Activated CD4-positive, alpha-beta memory T cell treated with anti-CD3 and anti-CD28 coated beads for 36 hours (primary cell): ENCODE measurements at regions of chr11 and their contacts with region 1.

Region 1: GRCh38 chr11:75142714-75143419 is 8.0 kb upstream of the SLCO2B1 start:
- DNase-seq: peak; percentile 89
- H3K4me3 Mint-ChIP-seq: no peak overlapping the region
- H3K27ac Mint-ChIP-seq: peak overlapping the region; percentile 75
- H3K4me1 Mint-ChIP-seq: peaks cover 19% of the 10 kb centered on the region
- H3K27me3 Mint-ChIP-seq: peaks cover 3% of the 10 kb centered on the region

Region 2: DNA sequence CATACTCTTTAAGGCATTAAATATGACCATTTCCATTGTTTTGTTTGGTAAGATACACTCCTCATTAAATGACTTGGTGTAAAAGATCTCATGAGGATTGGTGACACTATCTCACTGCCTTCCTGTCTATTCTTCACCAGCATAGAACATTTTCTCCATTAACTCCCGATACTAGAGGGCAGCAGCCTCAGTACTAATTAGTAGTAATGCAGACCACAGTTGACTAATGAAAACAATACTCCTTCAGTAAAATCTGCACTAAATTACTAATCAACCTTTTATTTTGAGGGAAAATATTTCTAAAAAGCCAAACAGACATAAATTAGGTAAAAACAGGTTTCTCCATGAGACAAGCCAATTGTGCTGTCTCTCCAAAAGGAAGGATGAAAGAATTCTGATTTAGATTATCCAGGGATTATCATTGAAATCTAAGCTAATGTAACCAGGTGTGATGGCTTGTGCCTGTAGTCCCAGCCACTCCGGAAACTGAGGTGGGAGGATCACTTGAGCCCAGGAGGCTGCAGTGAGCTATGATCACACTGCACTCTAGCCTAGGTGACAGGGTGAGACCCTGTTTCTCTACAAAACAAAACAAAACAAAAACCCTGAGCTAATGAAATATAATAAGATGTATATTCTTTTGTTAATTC is 754.1 kb before region 1 on chr11:
- CTCF ChIA-PET with region 1: no interaction called
- POLR2A ChIA-PET with region 1: no interaction called
- intact Hi-C with region 1: no loop called
- DNase-seq: peak; percentile 68
- H3K4me3 Mint-ChIP-seq: no peak overlapping the region
- H3K27ac Mint-ChIP-seq: peak overlapping the region; percentile 4
- H3K4me1 Mint-ChIP-seq: peaks cover 31% of the 10 kb centered on the region
- H3K27me3 Mint-ChIP-seq: no peaks in the 10 kb centered on the region

Region 3: DNA sequence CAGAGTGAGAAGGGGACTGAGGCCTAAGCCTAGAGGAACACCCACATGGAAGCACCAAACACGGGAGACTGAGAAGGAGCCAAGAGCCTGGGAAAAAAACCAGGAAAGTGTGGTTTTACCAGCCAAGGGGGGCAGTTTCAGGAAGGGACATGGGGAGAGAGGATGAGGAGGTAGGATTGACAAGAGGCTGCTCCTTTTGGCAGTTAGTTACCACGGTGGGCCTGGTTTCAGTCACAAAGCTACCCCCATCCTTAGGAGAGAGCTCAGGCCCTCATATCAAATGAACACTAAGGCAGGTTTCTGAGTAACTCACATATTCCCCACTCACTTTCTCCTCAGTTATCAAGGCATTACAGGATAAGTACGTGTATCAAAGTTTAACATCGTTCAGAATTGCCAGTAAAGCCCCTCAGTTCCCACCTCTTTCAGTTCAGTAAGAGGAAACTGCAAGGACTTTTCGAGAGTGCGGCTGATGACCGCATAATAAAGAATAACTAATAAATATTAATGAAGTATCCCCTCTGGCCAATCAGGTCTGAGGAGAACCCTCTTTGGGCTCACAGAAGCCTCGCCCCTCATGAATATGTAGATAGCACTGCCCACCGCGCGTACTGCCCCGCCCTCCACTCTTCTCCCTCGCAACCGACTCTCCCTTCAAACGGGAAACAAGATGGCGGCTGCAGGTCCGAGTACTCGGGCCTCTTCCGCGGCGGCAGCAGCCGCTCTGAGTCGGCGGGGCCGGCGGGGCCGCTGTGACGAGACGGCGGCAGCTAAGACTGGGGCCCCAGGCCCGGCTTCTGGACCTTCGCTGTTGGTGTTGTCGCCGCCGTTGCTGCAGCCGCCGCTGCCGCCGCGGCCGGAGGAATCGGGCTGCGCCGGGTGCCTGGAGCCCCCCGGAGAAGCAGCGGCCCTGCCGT is 394.4 kb before region 1 on chr11 and contains the start of gene RNF169:
- CTCF ChIA-PET with region 1: interaction called, 3 read pairs
- POLR2A ChIA-PET with region 1: no interaction called
- intact Hi-C with region 1: loop called (anchors 2 kb)
- DNase-seq: peak; percentile 94
- H3K4me3 Mint-ChIP-seq: peak within 1 kb of the TSS; percentile 91
- H3K27ac Mint-ChIP-seq: peak within 1 kb of the TSS; percentile 74
- H3K4me1 Mint-ChIP-seq: peaks cover 33% of the 10 kb centered on the region
- H3K27me3 Mint-ChIP-seq: no peaks in the 10 kb centered on the region
- total RNA-seq, gene RNF169: 14.3 to 14.9 TPM

Region 4: DNA sequence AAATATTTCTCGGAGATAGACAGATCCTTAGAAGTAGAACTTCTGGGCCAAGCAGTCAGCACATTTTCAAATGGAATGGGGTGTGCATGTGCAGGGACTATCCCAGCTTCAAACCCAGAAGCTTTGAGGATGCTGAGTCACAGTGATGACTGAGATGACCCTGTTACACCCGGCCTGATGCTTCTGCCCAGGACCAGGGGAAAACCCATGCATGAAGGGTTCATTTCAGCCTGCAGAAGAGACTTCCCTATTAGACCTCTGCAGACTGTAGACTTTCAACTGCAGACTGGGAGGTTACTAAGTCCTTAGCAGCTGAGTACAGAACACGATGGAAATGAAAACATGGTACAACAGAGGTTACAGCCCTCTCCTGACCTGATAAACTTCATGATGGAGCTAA is 42.6 kb before region 1 on chr11:
- CTCF ChIA-PET with region 1: interaction called, 6 read pairs
- POLR2A ChIA-PET with region 1: no interaction called
- intact Hi-C with region 1: loop called (anchors 2 kb)
- DNase-seq: peak; percentile 79
- H3K4me3 Mint-ChIP-seq: no peak overlapping the region
- H3K27ac Mint-ChIP-seq: no peak overlapping the region
- H3K4me1 Mint-ChIP-seq: peaks cover 24% of the 10 kb centered on the region
- H3K27me3 Mint-ChIP-seq: peaks cover 43% of the 10 kb centered on the region

Region 5: GRCh38 chr11:75188671-75189070 is 45.8 kb after region 1 on chr11:
- CTCF ChIA-PET with region 1: interaction called, 26 read pairs
- POLR2A ChIA-PET with region 1: no interaction called
- intact Hi-C with region 1: no loop called
- DNase-seq: no peak
- H3K4me3 Mint-ChIP-seq: no peak overlapping the region
- H3K27ac Mint-ChIP-seq: no peak overlapping the region
- H3K4me1 Mint-ChIP-seq: no peaks in the 10 kb centered on the region
- H3K27me3 Mint-ChIP-seq: no peaks in the 10 kb centered on the region

Region 6: DNA sequence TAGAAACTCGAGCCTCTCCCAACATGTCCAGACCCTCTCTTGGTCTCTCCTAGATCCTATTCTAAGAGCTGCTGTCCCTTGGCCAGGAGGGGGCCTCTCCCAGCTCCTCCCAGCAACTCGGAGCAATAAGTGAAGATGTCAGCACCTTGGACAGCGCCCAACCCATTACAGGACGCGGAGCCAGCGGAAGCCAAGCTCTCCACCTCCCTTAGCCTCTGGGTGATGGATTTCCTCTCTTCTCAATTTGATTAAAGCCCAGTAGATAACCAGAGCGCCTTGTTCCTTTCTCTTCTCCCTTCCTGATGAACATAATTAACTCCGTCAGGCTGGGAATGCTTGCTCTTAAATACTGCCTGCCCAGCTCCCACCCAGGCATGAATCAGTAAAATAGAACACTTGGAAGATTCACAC is 71.5 kb after region 1 on chr11:
- CTCF ChIA-PET with region 1: interaction called, 559 read pairs
- POLR2A ChIA-PET with region 1: no interaction called
- intact Hi-C with region 1: no loop called
- DNase-seq: peak; percentile 84
- H3K4me3 Mint-ChIP-seq: no peak overlapping the region
- H3K27ac Mint-ChIP-seq: no peak overlapping the region
- H3K4me1 Mint-ChIP-seq: no peaks in the 10 kb centered on the region
- H3K27me3 Mint-ChIP-seq: peaks cover 20% of the 10 kb centered on the region

Region 7: DNA sequence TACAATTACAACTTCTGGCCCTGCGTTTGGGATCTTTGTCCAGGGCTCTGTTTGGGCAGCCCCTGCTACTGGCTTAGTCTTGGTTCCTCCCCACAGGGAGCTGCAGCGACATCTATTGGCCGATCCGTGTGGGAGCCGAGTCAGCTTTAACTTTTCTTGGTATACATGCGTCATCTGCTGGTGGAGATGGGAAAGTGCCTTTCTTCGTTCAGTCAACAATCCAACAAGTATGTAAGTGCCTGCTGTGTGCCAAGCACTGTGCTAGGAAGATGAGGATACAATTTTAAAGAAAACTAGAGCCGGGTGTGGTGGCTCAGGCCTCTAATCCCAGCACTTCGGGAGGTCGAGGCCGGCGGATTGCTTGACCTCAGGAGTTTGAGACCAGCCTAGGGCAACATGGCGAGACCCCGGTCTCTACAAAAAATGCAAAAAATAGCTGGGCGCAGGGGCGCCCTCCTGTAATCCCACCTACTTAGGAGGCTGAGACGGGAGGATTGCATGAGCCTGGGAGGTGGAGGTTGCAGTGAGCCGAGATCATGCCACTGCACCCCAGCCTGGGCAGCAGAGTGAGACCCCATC is 105.9 kb after region 1 on chr11:
- CTCF ChIA-PET with region 1: interaction called, 365 read pairs
- POLR2A ChIA-PET with region 1: interaction called, 3 read pairs
- intact Hi-C with region 1: loop called (anchors 1 kb)
- DNase-seq: peak; percentile 91
- H3K4me3 Mint-ChIP-seq: no peak overlapping the region
- H3K27ac Mint-ChIP-seq: peak overlapping the region; percentile 1
- H3K4me1 Mint-ChIP-seq: no peaks in the 10 kb centered on the region
- H3K27me3 Mint-ChIP-seq: peaks cover 7% of the 10 kb centered on the region